Heart left ventricle (tissue), 16 donors: ENCODE measurements at regions of chr16 and their contacts with region 1.

Region 1: GRCh38 chr16:13269905-13270528 is 368.6 kb downstream of the SHISA9 start:
- DNase-seq: no peak
- ATAC-seq: no peak
- H3K4me3 ChIP-seq: no peak overlapping the region
- H3K27ac ChIP-seq: no peak overlapping the region
- H3K4me1 ChIP-seq: no peaks in the 10 kb centered on the region
- H3K27me3 ChIP-seq: peaks cover 0 to 17% (median 0%) of the 10 kb centered on the region in 9 donors
- CTCF ChIP-seq: no peak
- POLR2A ChIP-seq: no peak

Region 2: DNA sequence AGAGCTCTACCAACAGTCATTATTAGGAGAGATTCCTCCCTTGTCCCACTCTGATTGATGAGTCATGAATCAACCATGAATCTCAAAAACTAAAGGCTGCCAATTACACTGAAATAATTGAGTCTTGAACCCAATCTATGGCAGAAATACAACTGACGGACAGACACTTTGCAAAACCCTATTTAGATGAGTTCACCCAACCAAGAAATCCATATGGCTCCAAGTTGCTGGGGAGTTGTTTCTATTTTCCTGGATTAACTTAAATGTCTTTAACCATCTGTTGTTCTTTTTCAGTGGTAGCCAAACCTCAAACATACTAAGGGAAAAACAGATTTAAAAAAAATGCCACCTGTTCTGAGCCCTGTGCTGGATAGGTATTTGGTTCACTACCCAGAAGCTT is 217.6 kb before region 1 on chr16:
- intact Hi-C with region 1: no loop called
- DNase-seq: no peak
- ATAC-seq: no peak
- H3K4me3 ChIP-seq: no peak overlapping the region
- H3K27ac ChIP-seq: no peak overlapping the region
- H3K4me1 ChIP-seq: no peaks in the 10 kb centered on the region
- H3K27me3 ChIP-seq: peaks cover 0 to 2% (median 0%) of the 10 kb centered on the region in 9 donors
- CTCF ChIP-seq: no peak
- POLR2A ChIP-seq: no peak

Region 3: GRCh38 chr16:13331919-13332318 is 61.9 kb after region 1 on chr16:
- intact Hi-C with region 1: loop called in 1 of 10 experiments (anchors 10 kb)
- DNase-seq: no peak
- ATAC-seq: no peak
- H3K4me3 ChIP-seq: no peak overlapping the region
- H3K27ac ChIP-seq: no peak overlapping the region
- H3K4me1 ChIP-seq: no peaks in the 10 kb centered on the region
- H3K27me3 ChIP-seq: peaks cover 0 to 6% (median 0%) of the 10 kb centered on the region in 9 donors
- CTCF ChIP-seq: no peak
- POLR2A ChIP-seq: no peak